Right ventricle myocardium inferior (tissue), 1 donor: ENCODE measurements at regions of chr7 and their contacts with region 1.

Region 1: GRCh38 chr7:50620433-50620832 is 55.2 kb upstream of the DDC start:
- DNase-seq: no peak
- ATAC-seq: no peak

Region 2: GRCh38 chr7:50671386-50671785 is 51.0 kb after region 1 on chr7:
- intact Hi-C with region 1: loop called (anchors 2 kb)
- DNase-seq: no peak
- ATAC-seq: no peak

Region 3: DNA sequence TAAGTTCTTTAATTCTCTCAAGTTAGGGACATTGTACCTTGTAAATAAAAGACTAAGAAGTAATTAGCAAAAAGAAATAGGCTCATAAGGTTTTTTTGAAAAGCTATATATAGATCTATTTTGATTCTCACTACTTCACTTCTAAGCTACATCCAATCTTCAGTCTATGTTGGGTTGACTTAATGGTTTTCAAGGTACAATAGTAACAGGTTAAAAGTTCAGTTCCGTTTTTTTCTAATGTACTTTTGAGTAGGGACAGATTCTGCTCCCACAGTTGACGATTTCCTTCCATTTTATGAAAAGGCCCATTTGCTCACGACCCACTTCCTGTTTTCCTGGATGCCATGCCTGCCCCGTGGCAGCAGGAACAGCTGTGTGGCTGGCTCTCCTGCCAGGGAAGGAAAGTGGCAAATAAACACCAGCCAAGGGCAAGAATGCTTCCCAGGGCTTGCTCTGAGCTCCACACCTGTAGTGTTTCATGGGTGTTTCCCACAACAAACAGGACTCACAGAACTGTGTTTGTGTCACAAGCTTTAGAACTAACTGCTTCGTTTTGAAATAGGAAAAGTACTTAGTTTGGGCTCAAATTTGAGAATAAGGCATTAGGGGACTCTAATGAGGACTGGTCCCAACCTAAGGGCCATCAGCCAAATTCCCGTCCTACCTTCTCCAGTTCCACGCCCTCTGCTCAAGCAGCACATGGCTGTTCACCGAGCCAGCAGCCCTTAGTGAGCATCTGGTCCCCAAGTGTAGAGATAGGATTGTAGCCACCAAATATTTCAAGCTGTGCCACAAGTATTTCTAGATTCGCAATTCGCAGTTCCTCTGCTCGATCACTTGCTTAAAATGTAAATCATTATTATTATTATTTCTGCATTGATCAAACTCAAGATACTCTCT is 455.5 kb after region 1 on chr7:
- intact Hi-C with region 1: loop called (anchors 5 kb)
- DNase-seq: no peak
- ATAC-seq: peak; percentile 69